ENCODE measurements at regions of chr2 and their contacts with region 1.

Region 1: GRCh38 chr2:213316001-213316735 is 31.9 kb downstream of the SPAG16 start:
- DNase-seq: peak; percentile 39
- ATAC-seq: peak; percentile 69
- H3K4me3 ChIP-seq: no peak overlapping the region
- H3K27ac ChIP-seq: no peak overlapping the region
- H3K4me1 ChIP-seq: peaks cover 0 to 22% of the 10 kb centered on the region in 2 experiments; a peak in 2 of 4 replicates
- H3K27me3 ChIP-seq: no peaks in the 10 kb centered on the region
- CTCF ChIP-seq: no peak
- POLR2A ChIP-seq: no peak
- RAD21 ChIP-seq: peak; percentile 7; the same call in 1 of the 2 replicates

Region 2: GRCh38 chr2:215280326-215280725 is 1964.2 kb after region 1 on chr2:
- CTCF ChIA-PET with region 1: no interaction called
- POLR2A ChIA-PET with region 1: no interaction called
- RAD21 ChIA-PET with region 1: no interaction called
- intact Hi-C with region 1: loop called (anchors 10 kb)
- DNase-seq: no peak
- ATAC-seq: no peak
- H3K4me3 ChIP-seq: no peak overlapping the region
- H3K27ac ChIP-seq: no peak overlapping the region
- H3K4me1 ChIP-seq: peaks cover 6 to 22% of the 10 kb centered on the region in 2 experiments; a peak in 3 of 4 replicates
- H3K27me3 ChIP-seq: no peaks in the 10 kb centered on the region
- CTCF ChIP-seq: no peak
- POLR2A ChIP-seq: no peak
- RAD21 ChIP-seq: no peak

Measured in HCT116 (cell line).